Endothelial cell of umbilical vein (primary cell): ENCODE measurements at regions of chr10 and their contacts with region 1.

Region 1: DNA sequence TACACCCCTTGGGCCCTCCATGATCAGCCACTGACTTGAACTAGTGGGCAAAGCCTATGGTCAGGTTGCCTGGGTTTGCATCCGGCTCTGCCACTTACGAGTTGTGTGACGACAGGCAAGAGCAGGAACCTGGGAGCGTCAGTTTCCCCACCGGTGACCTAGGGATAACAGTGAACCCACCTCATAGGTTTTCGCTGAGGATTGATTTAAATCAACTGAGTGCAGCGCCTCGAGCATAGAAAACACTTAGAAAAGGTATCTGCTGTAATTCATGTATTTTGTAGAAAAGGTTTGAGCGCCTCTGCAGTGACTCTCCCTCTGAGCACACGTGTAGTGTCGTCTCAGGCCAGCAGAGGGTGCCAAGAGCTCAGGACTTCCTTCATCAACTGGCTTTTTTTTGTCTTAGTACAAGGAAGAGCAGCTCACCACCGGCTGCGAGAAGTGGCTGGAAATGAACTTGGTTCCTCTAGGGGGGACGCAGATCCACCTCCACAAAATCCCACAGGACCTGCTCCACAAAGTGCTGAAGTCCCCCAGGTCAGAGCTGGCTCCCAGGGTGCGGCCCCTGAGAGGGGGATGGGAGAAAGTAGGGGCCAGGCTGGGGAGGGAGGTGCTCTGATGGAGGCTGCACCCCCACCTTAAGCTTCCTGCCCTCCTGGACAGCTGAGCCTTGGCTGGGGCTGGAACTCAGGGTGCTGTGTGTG is 27.7 kb downstream of the BTBD16 start:
- DNase-seq: peak; percentile 85
- H3K4me3 ChIP-seq: no peak overlapping the region
- H3K27ac ChIP-seq: no peak overlapping the region
- H3K4me1 ChIP-seq: no peaks in the 10 kb centered on the region
- H3K27me3 ChIP-seq: no peaks in the 10 kb centered on the region
- CTCF ChIP-seq: peak; percentile 81 to 96
- POLR2A ChIP-seq: no peak

Region 2: DNA sequence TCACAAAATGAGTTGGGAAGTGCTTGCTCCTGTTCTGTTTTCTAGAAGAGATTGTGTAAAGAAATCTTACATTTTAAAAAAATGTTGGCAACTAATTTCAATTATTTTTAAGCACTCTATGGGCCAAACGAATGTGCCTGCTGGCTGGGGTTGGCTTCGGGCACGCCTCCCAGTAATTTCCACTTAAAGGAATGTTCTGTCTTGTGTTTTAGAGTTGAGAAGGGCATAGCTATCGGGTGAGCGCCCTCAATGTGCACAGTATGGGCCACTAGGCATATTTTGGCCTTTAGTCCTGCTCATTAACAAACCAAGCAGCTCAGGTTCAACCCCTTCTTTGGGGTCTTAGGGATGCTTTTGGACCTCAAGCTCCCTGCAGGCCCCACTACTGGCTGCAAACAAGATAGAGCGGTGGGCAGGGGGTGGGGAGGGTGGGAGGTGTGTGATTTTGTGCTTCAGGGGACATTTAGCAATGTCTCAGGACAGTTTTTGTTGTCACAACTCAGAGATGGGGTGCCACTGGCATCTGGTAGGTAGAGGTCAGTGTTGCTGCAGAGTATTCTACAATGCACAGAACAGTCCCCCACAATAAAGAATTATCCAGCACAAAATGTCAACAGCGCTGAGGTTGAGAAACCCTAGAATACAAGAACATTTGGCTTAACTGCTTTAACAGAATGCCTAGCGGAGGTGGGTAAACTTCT is 269.1 kb before region 1 on chr10:
- CTCF ChIA-PET with region 1: no interaction called
- POLR2A ChIA-PET with region 1: no interaction called
- dilution Hi-C with region 1: no loop called
- intact Hi-C with region 1: no loop called
- DNase-seq: no peak
- H3K4me3 ChIP-seq: no peak overlapping the region
- H3K27ac ChIP-seq: no peak overlapping the region
- H3K4me1 ChIP-seq: no peaks in the 10 kb centered on the region
- H3K27me3 ChIP-seq: peaks cover 0 to 2% of the 10 kb centered on the region in 2 experiments
- CTCF ChIP-seq: no peak
- POLR2A ChIP-seq: no peak

Region 3: GRCh38 chr10:122267849-122268737 is 30.7 kb before region 1 on chr10:
- CTCF ChIA-PET with region 1: interaction called, 11 read pairs
- POLR2A ChIA-PET with region 1: no interaction called
- dilution Hi-C with region 1: no loop called
- intact Hi-C with region 1: no loop called
- DNase-seq: peak; percentile 47
- H3K4me3 ChIP-seq: no peak overlapping the region
- H3K27ac ChIP-seq: peak overlapping the region; percentile 74
- H3K4me1 ChIP-seq: peaks cover 20% of the 10 kb centered on the region
- H3K27me3 ChIP-seq: no peaks in the 10 kb centered on the region
- CTCF ChIP-seq: peak; percentile 96 to 97
- POLR2A ChIP-seq: no peak

Region 4: DNA sequence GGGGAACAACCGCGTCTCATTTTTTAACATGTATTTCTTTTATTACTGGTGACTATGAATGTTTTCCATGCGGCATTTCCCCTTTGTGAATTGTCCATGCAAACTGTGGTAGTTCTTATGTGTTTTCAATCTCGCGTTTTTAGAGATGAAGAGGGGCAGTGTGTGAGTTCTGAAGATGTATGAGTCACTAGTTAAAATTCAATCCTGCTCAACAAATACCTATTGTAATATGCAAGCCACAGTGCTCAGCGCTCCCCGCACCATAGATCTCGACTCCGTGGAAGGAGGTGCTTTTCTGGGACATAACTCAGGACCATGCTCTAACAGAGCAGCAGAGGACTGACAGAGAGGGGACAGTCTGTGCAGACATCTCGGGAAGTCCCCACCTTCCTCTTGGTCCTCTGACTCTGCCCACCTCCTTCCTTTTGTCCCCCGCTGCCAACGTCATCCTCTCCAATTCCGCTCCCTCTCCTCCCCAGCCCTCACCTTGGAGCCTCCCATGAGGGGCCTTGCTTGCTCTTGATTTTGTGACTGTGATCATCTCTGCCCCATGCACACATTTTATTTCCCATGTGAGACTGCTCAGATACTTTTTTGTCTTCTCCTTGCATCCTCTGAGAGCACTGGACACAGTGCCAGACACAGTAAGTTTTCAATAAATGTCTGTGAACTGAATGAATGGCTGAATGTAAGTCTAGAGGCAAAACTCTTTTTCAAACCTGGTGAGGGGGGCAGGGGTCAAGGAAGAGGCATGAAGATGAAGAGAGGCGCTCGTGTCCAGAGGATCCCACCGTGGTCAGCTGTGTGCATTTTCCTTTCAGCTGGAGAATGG is 33.1 kb after region 1 on chr10:
- CTCF ChIA-PET with region 1: interaction called, 15 read pairs
- POLR2A ChIA-PET with region 1: no interaction called
- dilution Hi-C with region 1: no loop called
- intact Hi-C with region 1: no loop called
- DNase-seq: no peak
- H3K4me3 ChIP-seq: no peak overlapping the region
- H3K27ac ChIP-seq: no peak overlapping the region
- H3K4me1 ChIP-seq: no peaks in the 10 kb centered on the region
- H3K27me3 ChIP-seq: peaks cover 0 to 2% of the 10 kb centered on the region in 2 experiments
- CTCF ChIP-seq: no peak
- POLR2A ChIP-seq: no peak

Region 5: DNA sequence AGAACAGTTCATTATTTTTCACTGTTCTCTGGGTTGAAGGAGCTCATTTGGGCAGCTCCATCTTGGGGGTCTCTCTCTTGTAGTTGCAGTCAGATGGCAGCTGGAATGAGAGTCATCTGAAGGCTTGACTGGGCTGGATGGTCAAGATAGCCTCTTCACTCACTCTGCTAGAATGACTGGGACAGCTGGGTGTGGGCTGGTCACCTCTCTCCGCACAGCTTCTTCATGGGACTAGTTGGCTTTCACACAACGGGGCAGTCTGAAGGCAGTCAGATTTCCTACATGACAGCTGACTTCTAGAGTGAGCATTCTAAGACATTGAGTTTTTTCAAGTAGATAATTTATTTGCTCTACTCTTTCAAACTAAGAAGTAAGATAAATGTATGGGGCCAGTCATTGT is 88.8 kb after region 1 on chr10:
- CTCF ChIA-PET with region 1: interaction called, 10 read pairs
- POLR2A ChIA-PET with region 1: no interaction called
- dilution Hi-C with region 1: no loop called
- intact Hi-C with region 1: no loop called
- DNase-seq: no peak
- H3K4me3 ChIP-seq: no peak overlapping the region
- H3K27ac ChIP-seq: no peak overlapping the region
- H3K4me1 ChIP-seq: no peaks in the 10 kb centered on the region
- H3K27me3 ChIP-seq: no peaks in the 10 kb centered on the region
- CTCF ChIP-seq: no peak
- POLR2A ChIP-seq: no peak

Region 6: GRCh38 chr10:122435212-122435827 is 136.6 kb after region 1 on chr10:
- CTCF ChIA-PET with region 1: interaction called, 191 read pairs
- POLR2A ChIA-PET with region 1: no interaction called
- dilution Hi-C with region 1: loop called (anchors 25 kb)
- intact Hi-C with region 1: loop called (anchors 1 kb)
- DNase-seq: peak; percentile 64
- H3K4me3 ChIP-seq: no peak overlapping the region
- H3K27ac ChIP-seq: no peak overlapping the region
- H3K4me1 ChIP-seq: no peaks in the 10 kb centered on the region
- H3K27me3 ChIP-seq: no peaks in the 10 kb centered on the region
- CTCF ChIP-seq: peak; percentile 8 to 23
- POLR2A ChIP-seq: no peak

Region 7: GRCh38 chr10:122648599-122649428 is 350.1 kb after region 1 on chr10:
- CTCF ChIA-PET with region 1: interaction called, 14 read pairs
- POLR2A ChIA-PET with region 1: no interaction called
- dilution Hi-C with region 1: no loop called
- intact Hi-C with region 1: no loop called
- DNase-seq: peak; percentile 50
- H3K4me3 ChIP-seq: no peak overlapping the region
- H3K27ac ChIP-seq: no peak overlapping the region
- H3K4me1 ChIP-seq: no peaks in the 10 kb centered on the region
- H3K27me3 ChIP-seq: peaks cover 3 to 9% of the 10 kb centered on the region in 2 experiments
- CTCF ChIP-seq: peak; percentile 72 to 75
- POLR2A ChIP-seq: no peak